ENCODE measurements at regions of chr20 and their contacts with region 1.

Region 1: DNA sequence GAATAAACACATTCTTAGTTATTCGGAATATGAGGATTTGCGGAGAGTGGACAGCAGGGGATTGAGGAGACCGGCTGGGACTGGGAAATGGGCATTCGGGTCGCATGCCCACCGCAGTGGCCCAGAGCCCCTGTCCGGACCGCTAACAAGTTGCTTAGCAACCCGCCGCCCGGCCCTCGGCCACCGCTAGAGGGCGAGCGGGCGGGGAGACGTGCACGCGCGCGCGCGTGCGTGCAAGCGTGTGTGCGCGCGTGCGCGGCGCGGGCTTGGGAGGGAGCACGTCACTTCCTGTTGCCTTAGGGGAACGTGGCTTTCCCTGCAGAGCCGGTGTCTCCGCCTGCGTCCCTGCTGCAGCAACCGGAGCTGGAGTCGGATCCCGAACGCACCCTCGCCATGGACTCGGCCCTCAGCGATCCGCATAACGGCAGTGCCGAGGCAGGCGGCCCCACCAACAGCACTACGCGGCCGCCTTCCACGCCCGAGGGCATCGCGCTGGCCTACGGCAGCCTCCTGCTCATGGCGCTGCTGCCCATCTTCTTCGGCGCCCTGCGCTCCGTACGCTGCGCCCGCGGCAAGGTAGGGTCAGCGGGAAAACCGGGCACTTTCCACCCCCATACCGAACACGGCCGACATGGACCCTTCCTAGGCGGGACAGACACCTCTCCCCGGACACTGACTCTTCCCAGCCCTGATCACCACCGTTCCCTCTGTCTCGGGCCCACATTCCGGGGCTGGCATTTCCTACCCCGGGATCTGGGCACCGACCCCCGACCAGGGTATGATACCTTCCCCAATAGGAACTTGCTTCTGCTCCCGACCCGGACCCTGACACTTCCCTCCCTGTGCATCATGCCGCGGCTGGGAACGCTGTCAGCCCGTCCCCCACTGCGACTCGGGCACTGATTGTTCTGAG is at the start of gene HM13:
- DNase-seq: peak; percentile 75 to 95 (median 88)
- ATAC-seq: peak; percentile 84
- H3K4me3 ChIP-seq: peak within 1 kb of the TSS; percentile 77 to 79
- H3K4me3 Mint-ChIP-seq: no peak within 1 kb of the TSS
- H3K27ac ChIP-seq: peak within 1 kb of the TSS; percentile 68 to 77
- H3K27ac Mint-ChIP-seq: peak within 1 kb of the TSS; percentile 46
- H3K4me1 ChIP-seq: peaks cover 31% of the 10 kb centered on the region
- H3K4me1 Mint-ChIP-seq: peaks cover 9% of the 10 kb centered on the region
- H3K27me3 ChIP-seq: no peaks in the 10 kb centered on the region
- H3K27me3 Mint-ChIP-seq: no peaks in the 10 kb centered on the region
- CTCF ChIP-seq: peak; percentile 91
- total RNA-seq, gene HM13: 106 to 107 TPM

Region 2: GRCh38 chr20:31547017-31547675 is 32.7 kb after region 1 on chr20:
- CTCF ChIA-PET with region 1: no interaction called
- POLR2A ChIA-PET with region 1: no interaction called
- intact Hi-C with region 1: loop called (anchors 2 kb)
- DNase-seq: peak; percentile 61 to 92 (median 78)
- ATAC-seq: peak; percentile 86
- H3K4me3 ChIP-seq: peak overlapping the region; percentile 62 to 70
- H3K4me3 Mint-ChIP-seq: peak overlapping the region; percentile 91
- H3K27ac ChIP-seq: peak overlapping the region; percentile 88 to 91
- H3K27ac Mint-ChIP-seq: peak overlapping the region; percentile 98
- H3K4me1 ChIP-seq: peaks cover 12% of the 10 kb centered on the region
- H3K4me1 Mint-ChIP-seq: peaks cover 33% of the 10 kb centered on the region
- H3K27me3 ChIP-seq: no peaks in the 10 kb centered on the region
- H3K27me3 Mint-ChIP-seq: no peaks in the 10 kb centered on the region
- CTCF ChIP-seq: no peak

Region 3: DNA sequence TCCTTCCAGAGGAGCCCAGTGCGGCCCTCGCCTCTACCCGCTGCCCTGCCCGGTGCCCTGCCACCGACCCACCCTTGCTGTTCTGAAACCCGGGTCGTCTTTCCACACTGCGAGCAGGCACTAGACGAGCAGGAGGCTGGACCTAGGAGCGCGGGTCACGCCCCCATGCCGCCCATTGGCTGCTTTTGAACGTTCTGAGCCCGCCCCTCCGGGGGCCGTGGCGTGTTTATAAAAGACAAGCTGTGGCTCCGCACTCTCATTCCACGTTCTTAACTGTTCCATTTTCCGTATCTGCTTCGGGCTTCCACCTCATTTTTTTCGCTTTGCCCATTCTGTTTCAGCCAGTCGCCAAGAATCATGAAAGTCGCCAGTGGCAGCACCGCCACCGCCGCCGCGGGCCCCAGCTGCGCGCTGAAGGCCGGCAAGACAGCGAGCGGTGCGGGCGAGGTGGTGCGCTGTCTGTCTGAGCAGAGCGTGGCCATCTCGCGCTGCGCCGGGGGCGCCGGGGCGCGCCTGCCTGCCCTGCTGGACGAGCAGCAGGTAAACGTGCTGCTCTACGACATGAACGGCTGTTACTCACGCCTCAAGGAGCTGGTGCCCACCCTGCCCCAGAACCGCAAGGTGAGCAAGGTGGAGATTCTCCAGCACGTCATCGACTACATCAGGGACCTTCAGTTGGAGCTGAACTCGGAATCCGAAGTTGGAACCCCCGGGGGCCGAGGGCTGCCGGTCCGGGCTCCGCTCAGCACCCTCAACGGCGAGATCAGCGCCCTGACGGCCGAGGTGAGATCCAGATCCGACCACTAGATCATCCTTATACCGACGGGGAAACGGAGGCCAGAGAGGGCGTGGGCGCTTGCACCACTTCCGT is 90.9 kb after region 1 on chr20 and contains the start of gene ID1:
- CTCF ChIA-PET with region 1: no interaction called
- POLR2A ChIA-PET with region 1: no interaction called
- intact Hi-C with region 1: loop called in 1 of 2 experiments (anchors 2 kb)
- DNase-seq: peak; percentile 78 to 93 (median 89)
- ATAC-seq: peak; percentile 89
- H3K4me3 ChIP-seq: peak within 1 kb of the TSS; percentile 57 to 68
- H3K4me3 Mint-ChIP-seq: peak within 1 kb of the TSS; percentile 93
- H3K27ac ChIP-seq: peak within 1 kb of the TSS in 1 of 2 experiments; percentile 30
- H3K27ac Mint-ChIP-seq: peak within 1 kb of the TSS; percentile 60
- H3K4me1 ChIP-seq: peaks cover 24% of the 10 kb centered on the region
- H3K4me1 Mint-ChIP-seq: peaks cover 26% of the 10 kb centered on the region
- H3K27me3 ChIP-seq: peaks cover 5 to 27% of the 10 kb centered on the region in 2 experiments
- H3K27me3 Mint-ChIP-seq: peaks cover 43% of the 10 kb centered on the region
- CTCF ChIP-seq: no peak
- total RNA-seq, gene ID1: 8.1 to 11.0 TPM

Region 4: GRCh38 chr20:31738729-31739561 is 224.5 kb after region 1 on chr20 and contains the start of gene TPX2:
- CTCF ChIA-PET with region 1: no interaction called
- POLR2A ChIA-PET with region 1: no interaction called
- intact Hi-C with region 1: loop called in 1 of 2 experiments (anchors 5 kb)
- DNase-seq: peak; percentile 33 to 91 (median 78)
- ATAC-seq: peak; percentile 88
- H3K4me3 ChIP-seq: peak within 1 kb of the TSS; percentile 74 to 80
- H3K4me3 Mint-ChIP-seq: no peak within 1 kb of the TSS
- H3K27ac ChIP-seq: no peak within 1 kb of the TSS
- H3K27ac Mint-ChIP-seq: no peak within 1 kb of the TSS
- H3K4me1 ChIP-seq: peaks cover 15% of the 10 kb centered on the region
- H3K4me1 Mint-ChIP-seq: no peaks in the 10 kb centered on the region
- H3K27me3 ChIP-seq: no peaks in the 10 kb centered on the region
- H3K27me3 Mint-ChIP-seq: no peaks in the 10 kb centered on the region
- CTCF ChIP-seq: no peak
- total RNA-seq, gene TPX2: 0.62 to 0.75 TPM